Activated T-helper 2 cell treated with anti-CD3 and anti-CD28 coated beads, Interferon-gamma antibody, Interleukin-2, Interleukin-4, amounts not matched to agents 10 μg/mL and 5 μg/mL and 100 μg/mL, durations not matched to agents 14 hours and 24 hours and 36 hours (primary cell): ENCODE measurements at regions of chr6 and their contacts with region 1.

Region 1: GRCh38 chr6:105646391-105646867 is 243.5 kb upstream of the PREP start:
- DNase-seq: peak; percentile 66
- H3K4me3 Mint-ChIP-seq: peak overlapping the region; percentile 22
- H3K27ac Mint-ChIP-seq: peak overlapping the region; percentile 84
- H3K4me1 Mint-ChIP-seq: peaks cover 81% of the 10 kb centered on the region
- H3K27me3 Mint-ChIP-seq: no peaks in the 10 kb centered on the region

Region 2: GRCh38 chr6:105509506-105510331 is 136.7 kb before region 1 on chr6:
- intact Hi-C with region 1: no loop called
- DNase-seq: no peak
- H3K4me3 Mint-ChIP-seq: no peak overlapping the region
- H3K27ac Mint-ChIP-seq: no peak overlapping the region
- H3K4me1 Mint-ChIP-seq: peaks cover 25% of the 10 kb centered on the region
- H3K27me3 Mint-ChIP-seq: peaks cover 12% of the 10 kb centered on the region

Region 3: GRCh38 chr6:105560611-105561066 is 85.8 kb before region 1 on chr6:
- intact Hi-C with region 1: loop called (anchors 1 kb)
- DNase-seq: no peak
- H3K4me3 Mint-ChIP-seq: no peak overlapping the region
- H3K27ac Mint-ChIP-seq: peak overlapping the region; percentile 33
- H3K4me1 Mint-ChIP-seq: peaks cover 20% of the 10 kb centered on the region
- H3K27me3 Mint-ChIP-seq: peaks cover 6% of the 10 kb centered on the region

Region 4: GRCh38 chr6:105626295-105627158 is 19.9 kb before region 1 on chr6:
- intact Hi-C with region 1: loop called (anchors 1 kb)
- DNase-seq: no peak
- H3K4me3 Mint-ChIP-seq: peak overlapping the region; percentile 9
- H3K27ac Mint-ChIP-seq: peak overlapping the region; percentile 79
- H3K4me1 Mint-ChIP-seq: peaks cover 55% of the 10 kb centered on the region
- H3K27me3 Mint-ChIP-seq: peaks cover 5% of the 10 kb centered on the region

Region 5: GRCh38 chr6:105692626-105693215 is 46.3 kb after region 1 on chr6:
- intact Hi-C with region 1: no loop called
- DNase-seq: no peak
- H3K4me3 Mint-ChIP-seq: no peak overlapping the region
- H3K27ac Mint-ChIP-seq: no peak overlapping the region
- H3K4me1 Mint-ChIP-seq: peaks cover 6% of the 10 kb centered on the region
- H3K27me3 Mint-ChIP-seq: peaks cover 6% of the 10 kb centered on the region

Region 6: GRCh38 chr6:105898286-105898685 is 251.9 kb after region 1 on chr6:
- intact Hi-C with region 1: loop called (anchors 1 kb)
- DNase-seq: no peak
- H3K4me3 Mint-ChIP-seq: no peak overlapping the region
- H3K27ac Mint-ChIP-seq: no peak overlapping the region
- H3K4me1 Mint-ChIP-seq: peaks cover 30% of the 10 kb centered on the region
- H3K27me3 Mint-ChIP-seq: no peaks in the 10 kb centered on the region

Region 7: GRCh38 chr6:105994227-105995068 is 348.0 kb after region 1 on chr6:
- intact Hi-C with region 1: no loop called
- DNase-seq: peak; percentile 63
- H3K4me3 Mint-ChIP-seq: peak overlapping the region; percentile 94
- H3K27ac Mint-ChIP-seq: peak overlapping the region; percentile 81
- H3K4me1 Mint-ChIP-seq: peaks cover 51% of the 10 kb centered on the region
- H3K27me3 Mint-ChIP-seq: peaks cover 27% of the 10 kb centered on the region

Region 8: DNA sequence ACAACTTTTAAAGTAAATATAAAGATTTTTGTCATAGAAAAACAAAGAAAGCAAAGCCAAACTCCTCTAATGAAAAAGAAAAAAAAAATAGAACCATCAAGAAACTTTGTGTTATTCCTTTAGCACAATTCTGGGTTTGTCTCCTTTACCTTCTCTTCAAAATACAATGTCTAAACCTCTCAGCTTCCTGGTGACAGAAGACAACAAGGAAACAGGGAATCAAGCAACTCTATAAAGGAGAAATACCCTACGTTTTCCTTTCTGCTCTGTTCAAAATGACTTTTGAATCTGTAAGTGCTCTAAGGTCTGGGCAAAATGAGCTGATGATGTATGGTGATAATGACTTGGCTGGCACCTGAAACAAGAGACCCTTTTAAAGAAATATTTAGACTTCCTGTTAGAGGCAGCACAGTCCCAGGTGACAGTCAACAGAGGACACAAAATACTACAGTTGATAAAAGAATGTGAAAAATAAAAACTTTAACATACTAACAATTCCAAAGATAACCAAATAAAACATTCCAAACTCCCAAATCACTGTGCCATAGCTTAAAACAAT is 541.1 kb after region 1 on chr6:
- intact Hi-C with region 1: loop called (anchors 2 kb)
- DNase-seq: no peak
- H3K4me3 Mint-ChIP-seq: peak overlapping the region; percentile 48
- H3K27ac Mint-ChIP-seq: peak overlapping the region; percentile 86
- H3K4me1 Mint-ChIP-seq: peaks cover 68% of the 10 kb centered on the region
- H3K27me3 Mint-ChIP-seq: no peaks in the 10 kb centered on the region